Activated naive CD4-positive, alpha-beta T cell treated with anti-CD3 and anti-CD28 coated beads, Interleukin-2, amount 10 ng/mL, durations not matched to agents 7 days and 5 days (primary cell): ENCODE measurements at regions of chr20 and their contacts with region 1.

Region 1: GRCh38 chr20:38645980-38646858 is 44.6 kb downstream of the ARHGAP40 start:
- DNase-seq: peak; percentile 91
- H3K4me3 Mint-ChIP-seq: peak overlapping the region; percentile 50
- H3K27ac Mint-ChIP-seq: no peak overlapping the region
- H3K4me1 Mint-ChIP-seq: peaks cover 10% of the 10 kb centered on the region
- H3K27me3 Mint-ChIP-seq: peaks cover 63% of the 10 kb centered on the region

Region 2: GRCh38 chr20:38633577-38634093 is 12.6 kb before region 1 on chr20:
- CTCF ChIA-PET with region 1: interaction called, 13 read pairs
- DNase-seq: peak; percentile 67
- H3K4me3 Mint-ChIP-seq: no peak overlapping the region
- H3K27ac Mint-ChIP-seq: no peak overlapping the region
- H3K4me1 Mint-ChIP-seq: peaks cover 2% of the 10 kb centered on the region
- H3K27me3 Mint-ChIP-seq: peaks cover 54% of the 10 kb centered on the region

Region 3: DNA sequence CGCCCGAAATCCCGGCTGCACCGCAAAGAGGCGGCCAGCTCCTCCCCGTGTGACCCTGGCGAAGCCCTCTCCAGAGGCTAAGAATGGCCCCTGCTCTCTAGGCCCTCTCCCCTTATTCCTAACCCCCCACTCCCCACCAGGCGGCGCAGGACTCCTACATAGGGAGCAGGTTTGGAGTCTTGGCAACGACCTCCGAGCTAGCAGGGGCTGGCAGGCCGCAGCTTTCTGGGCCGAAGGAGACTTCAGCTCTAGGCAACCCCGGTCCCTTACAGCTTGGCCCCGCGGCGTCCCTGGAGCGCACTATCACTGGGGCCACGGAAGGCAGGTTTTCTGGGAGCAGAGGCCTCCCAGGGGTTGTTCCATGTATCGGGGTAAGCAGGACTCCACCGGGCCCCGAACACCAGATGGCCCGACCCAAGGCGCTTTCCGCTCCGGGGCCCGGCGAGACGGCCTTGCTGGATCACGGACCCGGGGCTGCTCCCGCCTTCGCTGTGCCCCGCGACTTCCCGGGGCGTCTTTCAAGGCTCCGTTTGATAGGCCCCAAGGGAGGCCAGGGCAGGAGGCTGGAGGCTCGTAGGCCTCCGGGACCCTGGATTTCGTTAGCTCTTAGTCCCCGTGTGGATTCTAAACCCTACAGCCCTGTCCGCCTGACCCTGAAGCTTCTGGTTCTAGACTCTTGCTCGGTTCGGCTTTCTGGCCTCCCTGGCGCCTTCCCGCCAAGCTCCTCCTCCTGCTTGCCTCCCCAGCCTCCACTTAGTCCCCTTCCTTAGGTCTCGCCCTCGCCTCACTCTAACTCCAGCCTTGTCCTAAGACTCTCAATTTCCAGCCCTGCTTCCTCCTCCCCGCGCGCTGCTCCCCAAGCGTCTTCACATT is 79.9 kb after region 1 on chr20:
- CTCF ChIA-PET with region 1: interaction called, 10 read pairs
- DNase-seq: peak; percentile 69
- H3K4me3 Mint-ChIP-seq: peak overlapping the region; percentile 40
- H3K27ac Mint-ChIP-seq: peak overlapping the region; percentile 84
- H3K4me1 Mint-ChIP-seq: peaks cover 61% of the 10 kb centered on the region
- H3K27me3 Mint-ChIP-seq: peaks cover 100% of the 10 kb centered on the region

Region 4: DNA sequence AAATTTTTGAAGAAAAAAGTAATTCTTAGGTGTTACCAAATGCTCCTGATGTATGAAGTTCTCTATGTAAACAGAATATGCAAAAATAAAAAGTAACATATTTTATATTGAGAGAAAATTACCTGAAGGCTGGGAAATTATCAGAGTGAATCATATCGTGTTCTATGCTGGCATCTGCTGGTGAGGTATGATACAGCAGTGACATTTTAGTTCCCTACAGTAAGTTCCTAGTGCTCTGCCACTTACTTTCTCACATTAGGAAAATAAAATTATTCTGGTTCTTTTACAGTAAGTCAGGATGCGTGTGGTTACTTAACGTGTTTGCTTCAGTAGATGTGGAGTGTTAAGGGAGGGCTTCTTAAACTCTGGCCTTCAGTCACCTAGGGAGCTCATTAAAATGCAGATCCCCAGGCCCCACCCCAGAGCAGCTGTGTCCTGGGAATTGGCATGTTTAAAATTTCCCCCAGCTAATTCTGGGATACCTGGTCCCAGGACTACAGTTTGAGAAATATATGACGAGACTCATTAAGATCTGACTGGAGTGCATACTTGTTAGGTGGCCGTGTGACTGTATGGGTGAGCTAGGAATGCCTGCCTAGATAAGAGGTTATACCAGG is 105.2 kb after region 1 on chr20:
- CTCF ChIA-PET with region 1: interaction called, 19 read pairs
- DNase-seq: peak; percentile 53
- H3K4me3 Mint-ChIP-seq: no peak overlapping the region
- H3K27ac Mint-ChIP-seq: no peak overlapping the region
- H3K4me1 Mint-ChIP-seq: peaks cover 31% of the 10 kb centered on the region
- H3K27me3 Mint-ChIP-seq: no peaks in the 10 kb centered on the region

Region 5: DNA sequence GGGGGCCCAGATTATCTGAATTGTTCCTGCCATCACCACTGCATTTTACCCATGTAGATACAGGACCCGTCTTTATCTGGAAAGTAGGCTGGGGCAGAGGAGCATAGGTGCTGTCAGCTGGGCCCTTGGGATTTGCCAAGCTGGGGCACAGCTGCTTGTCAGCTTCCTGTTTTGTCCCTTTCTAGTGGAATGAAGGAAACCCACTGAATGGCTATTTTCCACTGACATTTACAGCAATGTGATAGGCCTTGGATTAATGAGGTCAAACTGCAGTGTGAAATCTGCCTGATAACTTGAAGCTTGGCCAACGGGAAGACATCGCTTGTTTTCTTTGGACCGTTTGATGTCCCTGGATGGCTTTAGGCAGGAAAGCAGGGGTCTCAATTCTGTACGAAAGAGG is 166.0 kb after region 1 on chr20:
- CTCF ChIA-PET with region 1: no interaction called
- DNase-seq: no peak
- H3K4me3 Mint-ChIP-seq: no peak overlapping the region
- H3K27ac Mint-ChIP-seq: no peak overlapping the region
- H3K4me1 Mint-ChIP-seq: peaks cover 85% of the 10 kb centered on the region
- H3K27me3 Mint-ChIP-seq: no peaks in the 10 kb centered on the region